BJ (cell line): ENCODE measurements at regions of chr9 and their contacts with region 1.

Region 1: GRCh38 chr9:98848450-98849149 is 41.1 kb downstream of the GALNT12 start:
- DNase-seq: no peak
- H3K4me3 ChIP-seq: peak overlapping the region; percentile 26
- H3K27me3 ChIP-seq: peaks cover 6% of the 10 kb centered on the region; the same call in 1 of the 2 replicates
- CTCF ChIP-seq: peak; percentile 95

Region 2: GRCh38 chr9:98654247-98654646 is 194.4 kb before region 1 on chr9:
- CTCF ChIA-PET with region 1: no interaction called
- POLR2A ChIA-PET with region 1: no interaction called
- DNase-seq: peak; percentile 70
- H3K4me3 ChIP-seq: no peak overlapping the region
- H3K27me3 ChIP-seq: peaks cover 1% of the 10 kb centered on the region; the same call in 1 of the 2 replicates
- CTCF ChIP-seq: no peak

Region 3: GRCh38 chr9:98726735-98727134 is 121.9 kb before region 1 on chr9:
- CTCF ChIA-PET with region 1: no interaction called
- POLR2A ChIA-PET with region 1: no interaction called
- DNase-seq: no peak
- H3K4me3 ChIP-seq: no peak overlapping the region
- H3K27me3 ChIP-seq: peaks cover 12% of the 10 kb centered on the region
- CTCF ChIP-seq: no peak

Region 4: GRCh38 chr9:98838155-98838867 is 10.3 kb before region 1 on chr9:
- CTCF ChIA-PET with region 1: interaction called, 30 read pairs
- POLR2A ChIA-PET with region 1: no interaction called
- DNase-seq: no peak
- H3K4me3 ChIP-seq: no peak overlapping the region
- H3K27me3 ChIP-seq: no peaks in the 10 kb centered on the region; the same call in 1 of the 2 replicates
- CTCF ChIP-seq: no peak

Region 5: DNA sequence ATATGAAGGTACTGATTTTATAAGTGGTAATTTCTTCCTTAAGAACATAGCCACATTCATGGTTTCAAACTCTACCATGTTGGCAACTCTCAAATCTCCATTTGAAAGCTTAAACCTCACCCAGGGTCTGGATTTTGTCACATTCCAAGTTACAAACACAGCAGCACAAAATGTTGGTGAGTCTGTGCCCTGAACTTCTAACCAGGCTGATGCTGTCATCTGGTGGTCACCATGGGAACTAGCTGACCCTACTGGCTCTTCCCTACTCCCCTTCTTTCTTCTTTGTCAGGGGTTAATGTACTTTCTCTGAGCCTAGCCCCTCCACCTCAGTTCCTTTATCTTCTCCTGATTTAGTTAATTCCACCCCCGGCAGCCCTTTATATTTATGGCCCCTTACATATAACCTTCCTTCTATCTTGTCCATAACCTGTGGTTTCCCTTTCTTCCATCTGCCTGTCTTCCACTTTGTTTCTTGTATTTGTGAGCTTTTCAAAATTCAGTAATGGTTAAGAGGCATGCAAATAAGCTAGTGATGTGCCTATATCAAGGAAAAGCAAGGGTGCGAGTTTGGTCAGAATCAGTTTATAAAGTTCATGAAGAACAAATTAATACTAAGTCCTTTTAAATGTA is 292.2 kb after region 1 on chr9:
- CTCF ChIA-PET with region 1: interaction called, 30 read pairs
- POLR2A ChIA-PET with region 1: no interaction called
- DNase-seq: no peak
- H3K4me3 ChIP-seq: no peak overlapping the region
- H3K27me3 ChIP-seq: no peaks in the 10 kb centered on the region
- CTCF ChIP-seq: peak; percentile 89